Dorsolateral prefrontal cortex (tissue), 120 donors: ENCODE measurements at regions of chr16 and their contacts with region 1.

Region 1: GRCh38 chr16:4957720-4958509 is at the start of gene SEC14L5:
- DNase-seq: peak; percentile 95 to 99 (median 98)
- H3K4me3 ChIP-seq: peak within 1 kb of the TSS; percentile 47 to 99 (median 81)
- H3K27ac ChIP-seq: peak within 1 kb of the TSS in 58 of 59 donors; percentile 25 to 100 (median 96)
- H3K27me3 ChIP-seq: no peaks in the 10 kb centered on the region
- CTCF ChIP-seq: peak in 4 of 56 donors; percentile 11 to 28 (median 20)
- total RNA-seq, gene SEC14L5: 34.5 to 145 (median 61.7) TPM

Region 2: DNA sequence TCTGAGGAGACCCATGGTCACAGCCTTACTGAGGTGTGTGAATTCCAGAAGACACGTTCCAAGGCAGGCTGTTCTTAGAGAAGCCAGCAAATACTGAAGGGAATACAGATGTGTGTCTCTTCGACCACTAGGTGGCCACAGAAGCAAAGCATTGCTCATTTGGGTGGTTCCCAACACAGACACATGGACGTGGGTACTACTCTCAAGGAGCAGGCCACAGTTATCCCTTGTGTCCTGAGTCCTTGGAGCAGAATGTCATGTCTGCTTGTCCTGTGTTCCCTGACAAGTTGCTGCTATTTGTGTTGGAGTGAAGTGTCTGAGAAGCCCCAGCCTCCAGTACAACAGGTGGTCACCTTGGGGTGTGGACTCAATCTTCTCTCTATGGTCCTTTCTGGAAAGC is 451.5 kb before region 1 on chr16:
- intact Hi-C with region 1: loop called in 1 of 2 experiments (anchors 5 kb)
- DNase-seq: peak in 7 of 10 donors; percentile 67 to 85 (median 73)
- H3K4me3 ChIP-seq: no peak overlapping the region
- H3K27ac ChIP-seq: peak overlapping the region in 54 of 59 donors; percentile 3 to 99 (median 62)
- H3K27me3 ChIP-seq: no peaks in the 10 kb centered on the region
- CTCF ChIP-seq: peak; percentile 74 to 93 (median 88)

Region 3: GRCh38 chr16:4766874-4767628 is 190.9 kb before region 1 on chr16 and contains the start of gene ZNF500:
- intact Hi-C with region 1: loop called in 1 of 2 experiments (anchors 10 kb)
- DNase-seq: peak; percentile 98 to 100 (median 99)
- H3K4me3 ChIP-seq: peak within 1 kb of the TSS; percentile 43 to 100 (median 97)
- H3K27ac ChIP-seq: peak within 1 kb of the TSS; percentile 74 to 98 (median 92)
- H3K27me3 ChIP-seq: no peaks in the 10 kb centered on the region
- CTCF ChIP-seq: peak in 32 of 56 donors; percentile 12 to 58 (median 32)
- total RNA-seq, gene ZNF500: 15.4 to 45.7 (median 25.2) TPM

Region 4: DNA sequence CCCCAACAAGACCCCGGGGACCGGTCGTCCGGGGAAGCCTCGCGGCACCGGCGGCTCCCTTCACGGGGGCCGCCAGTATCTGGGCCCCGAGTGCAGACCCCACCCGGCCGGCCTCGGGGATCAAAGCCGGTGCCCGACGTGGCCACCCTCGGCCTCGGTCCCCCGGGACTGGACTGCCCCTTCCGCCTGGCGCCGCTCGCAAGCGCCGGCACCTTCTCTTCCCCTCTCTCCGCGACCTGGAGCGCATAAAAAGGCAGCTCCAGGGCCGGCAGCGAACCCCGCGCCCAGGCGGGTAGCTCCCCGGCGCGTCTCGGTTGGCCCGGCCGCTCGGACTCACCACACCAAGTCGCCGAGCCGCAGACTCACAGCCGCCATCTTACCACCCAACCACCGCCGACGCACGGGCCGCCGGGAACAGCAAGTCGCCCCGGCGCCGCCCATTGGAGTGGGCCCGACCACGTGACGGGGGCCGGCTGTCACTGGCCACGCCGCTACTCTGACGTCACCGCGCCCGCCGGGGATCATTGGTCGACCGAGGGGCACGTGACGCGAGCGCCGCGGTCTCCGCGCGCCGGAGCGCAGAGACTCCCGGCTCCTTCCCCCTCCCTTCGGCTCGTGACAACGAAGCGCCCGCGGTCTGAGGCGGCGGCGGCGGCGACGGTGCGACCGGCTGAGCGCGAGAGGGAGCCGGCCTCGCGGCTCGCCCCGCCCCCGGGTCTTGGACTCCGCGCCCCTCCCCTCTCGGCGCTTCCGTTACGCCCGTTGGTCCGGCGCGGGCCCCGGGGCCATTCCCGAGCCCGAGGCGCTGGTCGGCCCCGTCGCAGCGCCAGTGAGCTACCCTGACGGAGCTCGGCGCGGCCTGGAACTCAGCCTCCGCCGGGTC is 110.8 kb before region 1 on chr16 and contains the starts of genes GLYR1 and UBN1:
- intact Hi-C with region 1: loop called in 1 of 2 experiments (anchors 5 kb)
- DNase-seq: peak; percentile 97 to 99 (median 99)
- H3K4me3 ChIP-seq: peak within 1 kb of the TSS; percentile 73 to 100 (median 97)
- H3K27ac ChIP-seq: peak within 1 kb of the TSS; percentile 67 to 97 (median 91)
- H3K27me3 ChIP-seq: no peaks in the 10 kb centered on the region
- CTCF ChIP-seq: peak in 27 of 56 donors; percentile 3 to 51 (median 17)
- total RNA-seq, gene GLYR1: 91.8 to 145 (median 122) TPM
- total RNA-seq, gene UBN1: 21.8 to 36.9 (median 28.7) TPM

Region 5: DNA sequence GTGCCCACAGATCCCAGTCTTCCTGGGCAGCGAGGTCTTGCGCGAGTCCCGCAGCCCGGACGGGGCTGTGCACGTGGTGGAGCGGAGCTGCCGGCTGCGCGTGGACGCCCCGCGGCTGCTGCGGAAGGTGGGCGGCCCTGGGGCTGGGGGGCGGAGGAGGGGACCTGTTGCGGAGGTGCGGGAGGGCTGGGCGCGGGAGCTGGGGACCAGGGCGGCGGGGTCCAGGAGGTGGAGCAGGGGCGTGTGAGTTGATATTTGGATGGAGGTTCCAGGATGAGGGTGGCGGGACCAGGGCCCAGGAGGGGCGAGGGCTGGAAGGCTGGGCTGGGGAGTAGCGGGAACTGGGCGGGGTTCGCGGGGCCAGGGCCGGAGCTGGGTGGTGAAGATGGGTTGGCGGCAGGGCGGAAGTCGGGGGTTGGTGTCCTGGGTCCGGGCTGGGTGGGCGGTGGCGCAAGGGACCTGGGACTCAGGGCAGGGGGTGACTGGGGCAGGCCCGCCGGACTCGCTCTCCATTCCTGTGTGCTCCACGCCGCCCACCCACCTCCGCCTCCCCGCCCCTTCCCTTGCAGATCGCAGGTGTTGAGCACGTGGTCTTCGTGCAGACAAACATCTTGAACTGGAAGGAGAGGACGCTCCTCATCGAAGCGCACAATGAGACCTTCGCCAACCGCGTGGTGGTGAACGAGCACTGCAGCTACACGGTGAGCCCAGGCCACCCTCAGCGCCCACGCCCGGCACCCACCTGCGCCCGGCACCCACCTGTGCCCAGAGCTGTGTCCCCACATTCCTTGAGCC is 29.9 kb after region 1 on chr16:
- intact Hi-C with region 1: no loop called
- DNase-seq: no peak
- H3K4me3 ChIP-seq: peak overlapping the region in 21 of 59 donors; percentile 9 to 44 (median 24)
- H3K27ac ChIP-seq: peak overlapping the region in 57 of 59 donors; percentile 0 to 84 (median 69)
- H3K27me3 ChIP-seq: peaks cover 0 to 20% (median 0%) of the 10 kb centered on the region in 45 donors
- CTCF ChIP-seq: no peak

Region 6: GRCh38 chr16:5025171-5025632 is 67.3 kb after region 1 on chr16:
- intact Hi-C with region 1: loop called (anchors 2 kb)
- DNase-seq: peak; percentile 34 to 91 (median 88)
- H3K4me3 ChIP-seq: peak overlapping the region in 26 of 59 donors; percentile 1 to 38 (median 21)
- H3K27ac ChIP-seq: peak overlapping the region; percentile 5 to 99 (median 79)
- H3K27me3 ChIP-seq: no peaks in the 10 kb centered on the region
- CTCF ChIP-seq: peak; percentile 21 to 85 (median 68)